ENCODE measurements at regions of chr10 and their contacts with region 1.

Region 1: DNA sequence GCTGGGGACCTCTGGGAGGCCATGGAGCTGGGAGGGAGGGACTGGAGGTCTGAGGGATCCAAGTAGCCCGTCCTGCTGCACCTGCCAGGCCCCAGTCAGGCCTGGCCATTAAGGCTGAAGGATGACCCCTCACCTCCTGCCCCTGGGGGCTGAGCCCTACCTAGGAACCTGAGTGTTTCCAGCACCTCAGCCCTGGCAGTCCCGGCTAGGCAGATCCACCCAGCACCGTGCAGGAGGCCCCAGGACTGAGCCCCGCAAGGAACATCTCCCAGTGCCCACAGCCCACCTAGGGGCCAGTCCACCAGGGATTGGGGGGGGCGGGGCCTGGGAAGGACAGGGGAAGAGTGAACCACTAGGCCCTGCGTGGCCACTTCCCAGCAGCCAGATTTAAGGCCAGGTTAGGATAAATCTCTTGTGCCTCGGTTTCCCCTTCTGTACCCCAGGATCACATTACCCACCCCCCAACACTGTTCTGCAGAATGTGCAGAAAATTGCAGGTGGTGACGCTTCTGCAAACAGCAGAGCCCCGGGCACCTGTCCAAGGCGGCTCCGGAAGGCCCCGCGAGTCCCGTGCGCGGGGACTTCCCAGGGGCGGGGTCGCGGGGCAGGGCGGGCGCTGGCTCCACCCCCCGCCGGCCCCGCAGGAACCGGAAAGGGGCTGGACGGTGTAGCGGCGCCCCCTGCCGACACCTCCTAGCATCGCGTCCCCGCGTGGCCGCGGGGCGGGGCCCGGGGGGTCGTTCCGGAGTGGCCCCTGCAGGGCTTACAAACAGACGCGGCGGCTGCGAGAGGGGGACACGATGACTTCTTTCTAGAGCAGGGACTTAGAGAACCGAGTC is 55.9 kb downstream of the PWWP2B start:
- DNase-seq: no peak
- H3K4me3 ChIP-seq: peak overlapping the region in 1 of 2 donors; percentile 23
- H3K27ac ChIP-seq: peak overlapping the region; percentile 54
- H3K4me1 ChIP-seq: peaks cover 21% of the 10 kb centered on the region
- H3K27me3 ChIP-seq: no peaks in the 10 kb centered on the region
- CTCF ChIP-seq: peak; percentile 85 to 99 (median 96)
- POLR2A ChIP-seq: no peak

Region 2: GRCh38 chr10:132387764-132388210 is 65.1 kb before region 1 on chr10:
- intact Hi-C with region 1: loop called (anchors 2 kb)
- DNase-seq: no peak
- H3K4me3 ChIP-seq: no peak overlapping the region
- H3K27ac ChIP-seq: peak overlapping the region; percentile 45
- H3K4me1 ChIP-seq: no peaks in the 10 kb centered on the region
- H3K27me3 ChIP-seq: no peaks in the 10 kb centered on the region
- CTCF ChIP-seq: peak; percentile 30 to 75 (median 60)
- POLR2A ChIP-seq: no peak

Region 3: DNA sequence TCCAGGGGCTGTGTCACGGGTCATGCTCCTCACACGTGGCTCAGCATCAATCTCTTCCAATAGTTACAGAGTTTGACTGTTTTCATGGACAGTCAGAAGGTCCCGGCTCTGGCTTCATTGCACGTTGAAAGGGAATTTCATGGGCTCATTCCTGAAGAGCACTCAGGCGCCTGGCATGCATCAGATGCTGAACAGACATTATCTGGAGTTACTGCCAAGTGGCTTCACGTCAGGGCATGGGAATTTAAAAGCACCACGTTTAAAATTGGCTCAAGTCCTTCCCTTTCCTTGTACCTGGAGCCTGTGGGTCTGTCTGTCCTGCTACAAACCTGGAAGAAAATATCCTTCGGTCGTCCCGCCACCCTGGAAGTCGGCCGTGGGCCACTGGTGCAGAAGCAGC is 439.2 kb after region 1 on chr10:
- intact Hi-C with region 1: no loop called
- DNase-seq: no peak
- H3K4me3 ChIP-seq: no peak overlapping the region
- H3K27ac ChIP-seq: no peak overlapping the region
- H3K4me1 ChIP-seq: peaks cover 6% of the 10 kb centered on the region
- H3K27me3 ChIP-seq: no peaks in the 10 kb centered on the region
- CTCF ChIP-seq: no peak
- POLR2A ChIP-seq: no peak

Measured in vagina (tissue), 2 donors.